ENCODE measurements at regions of chr1 and their contacts with region 1.

Region 1: GRCh38 chr1:45339789-45340570 is at the starts of genes MUTYH and TOE1:
- DNase-seq: peak; percentile 96
- H3K4me3 ChIP-seq: peak within 1 kb of the TSS; percentile 84 to 87
- H3K27ac ChIP-seq: peak within 1 kb of the TSS; percentile 97 to 98
- H3K4me1 ChIP-seq: peaks cover 0 to 11% of the 10 kb centered on the region in 2 experiments; a peak in 1 of 4 replicates
- H3K27me3 ChIP-seq: no peaks in the 10 kb centered on the region
- CTCF ChIP-seq: no peak
- EP300 ChIP-seq: peak in 1 of 2 experiments; percentile 19; a peak in 1 of 4 replicates
- RAD21 ChIP-seq: no peak
- polyA plus RNA-seq, gene MUTYH: 21.9 and 23.3 TPM in 2 replicates
- polyA plus RNA-seq, gene TOE1: 17.3 and 19.1 TPM in 2 replicates

Region 2: GRCh38 chr1:44775078-44775929 is 564.7 kb before region 1 on chr1 and contains the start of gene RPS8:
- CTCF ChIA-PET with region 1: no interaction called
- POLR2A ChIA-PET with region 1: interaction called, 10 read pairs
- DNase-seq: peak; percentile 90
- H3K4me3 ChIP-seq: peak within 1 kb of the TSS; percentile 54 to 79
- H3K27ac ChIP-seq: peak within 1 kb of the TSS; percentile 84 to 87
- H3K4me1 ChIP-seq: peaks cover 14 to 16% of the 10 kb centered on the region in 2 experiments; a peak in 3 of 4 replicates
- H3K27me3 ChIP-seq: no peaks in the 10 kb centered on the region
- CTCF ChIP-seq: no peak
- EP300 ChIP-seq: no peak; a peak in 1 of 4 replicates
- RAD21 ChIP-seq: no peak
- polyA plus RNA-seq, gene RPS8: 3,303 and 3,363 TPM in 2 replicates

Region 3: GRCh38 chr1:45326627-45327623 is 13.1 kb before region 1 on chr1 and contains the start of gene HPDL:
- CTCF ChIA-PET with region 1: interaction called, 5 read pairs
- POLR2A ChIA-PET with region 1: interaction called, 38 read pairs
- DNase-seq: peak; percentile 92
- H3K4me3 ChIP-seq: peak within 1 kb of the TSS in 1 of 2 experiments; percentile 35; a peak in 2 of 4 replicates
- H3K27ac ChIP-seq: no peak within 1 kb of the TSS; a peak in 1 of 4 replicates
- H3K4me1 ChIP-seq: peaks cover 0 to 8% of the 10 kb centered on the region in 2 experiments; a peak in 1 of 4 replicates
- H3K27me3 ChIP-seq: no peaks in the 10 kb centered on the region
- CTCF ChIP-seq: no peak
- EP300 ChIP-seq: no peak
- RAD21 ChIP-seq: no peak
- polyA plus RNA-seq, gene HPDL: 0.19 and 0.25 TPM in 2 replicates

Region 4: GRCh38 chr1:45490626-45491486 is 150.9 kb after region 1 on chr1 and contains the start of gene TESK2:
- CTCF ChIA-PET with region 1: interaction called, 55 read pairs
- POLR2A ChIA-PET with region 1: interaction called, 24 read pairs
- DNase-seq: peak; percentile 98
- H3K4me3 ChIP-seq: peak within 1 kb of the TSS; percentile 68 to 98
- H3K27ac ChIP-seq: peak within 1 kb of the TSS in 1 of 2 experiments; percentile 47; a peak in 2 of 4 replicates
- H3K4me1 ChIP-seq: peaks cover 0 to 5% of the 10 kb centered on the region in 2 experiments; a peak in 2 of 4 replicates
- H3K27me3 ChIP-seq: no peaks in the 10 kb centered on the region
- CTCF ChIP-seq: no peak
- EP300 ChIP-seq: no peak
- RAD21 ChIP-seq: no peak
- polyA plus RNA-seq, gene TESK2: 1.3 TPM in 2 replicates

Region 5: GRCh38 chr1:45521398-45522323 is 181.7 kb after region 1 on chr1 and contains the start of gene PRDX1:
- CTCF ChIA-PET with region 1: no interaction called
- POLR2A ChIA-PET with region 1: interaction called, 10 read pairs
- DNase-seq: peak; percentile 97
- H3K4me3 ChIP-seq: peak within 1 kb of the TSS; percentile 75 to 91
- H3K27ac ChIP-seq: peak within 1 kb of the TSS; percentile 92
- H3K4me1 ChIP-seq: peaks cover 6 to 15% of the 10 kb centered on the region in 2 experiments; a peak in 3 of 4 replicates
- H3K27me3 ChIP-seq: no peaks in the 10 kb centered on the region
- CTCF ChIP-seq: peak; percentile 25; the same call in 1 of the 2 replicates
- EP300 ChIP-seq: peak in 1 of 2 experiments; percentile 70; a peak in 2 of 4 replicates
- RAD21 ChIP-seq: no peak
- polyA plus RNA-seq, gene PRDX1: 467 and 551 TPM in 2 replicates